GM13977 (cell line): ENCODE measurements at regions of chr20 and their contacts with region 1.

Region 1: DNA sequence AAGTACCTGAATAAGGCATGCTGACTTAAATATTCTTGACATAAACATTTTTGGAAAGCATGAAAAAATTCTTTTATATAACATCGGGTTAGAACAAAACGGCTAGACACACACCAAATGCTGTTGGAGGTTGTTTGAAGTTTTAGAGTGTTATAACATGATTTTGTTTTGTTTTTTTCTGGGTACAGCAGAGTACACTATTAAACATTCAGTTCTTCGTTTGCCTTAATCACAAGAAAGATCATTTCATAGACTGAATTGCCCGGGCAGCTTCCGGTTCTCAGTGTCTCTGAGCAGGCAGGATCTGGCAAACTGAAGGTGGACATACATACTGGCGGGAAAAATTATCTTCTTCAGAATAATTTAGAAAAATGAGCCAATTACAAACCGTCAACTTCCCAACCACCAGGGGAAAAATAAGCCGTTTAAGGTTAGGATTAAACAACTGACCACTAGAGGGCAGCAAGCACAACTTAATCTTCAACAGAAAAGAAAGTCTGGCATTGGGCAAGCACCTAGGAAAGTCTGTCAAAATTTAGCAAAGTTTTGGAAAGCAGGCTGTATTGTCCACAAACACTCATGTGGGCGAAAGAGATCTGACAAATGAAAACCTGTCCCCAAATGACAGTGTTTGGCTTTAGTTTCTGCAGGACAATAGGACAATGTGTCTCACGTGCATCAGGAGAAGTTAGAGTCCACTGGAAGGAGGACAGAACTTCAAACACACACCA is 15.0 kb downstream of the ZNF217 start:
- DNase-seq: peak; percentile 69
- CTCF ChIP-seq: peak; percentile 60

Region 2: GRCh38 chr20:54062812-54063280 is 484.2 kb after region 1 on chr20:
- in situ Hi-C with region 1: loop called (anchors 10 kb)
- DNase-seq: peak; percentile 57
- CTCF ChIP-seq: peak; percentile 71